ENCODE measurements at regions of chr9 and their contacts with region 1.

Region 1: GRCh38 chr9:132235946-132236661 is 74.2 kb downstream of the NTNG2 start:
- DNase-seq: peak; percentile 44
- H3K4me3 ChIP-seq: no peak overlapping the region
- CTCF ChIP-seq: peak; percentile 98

Region 2: DNA sequence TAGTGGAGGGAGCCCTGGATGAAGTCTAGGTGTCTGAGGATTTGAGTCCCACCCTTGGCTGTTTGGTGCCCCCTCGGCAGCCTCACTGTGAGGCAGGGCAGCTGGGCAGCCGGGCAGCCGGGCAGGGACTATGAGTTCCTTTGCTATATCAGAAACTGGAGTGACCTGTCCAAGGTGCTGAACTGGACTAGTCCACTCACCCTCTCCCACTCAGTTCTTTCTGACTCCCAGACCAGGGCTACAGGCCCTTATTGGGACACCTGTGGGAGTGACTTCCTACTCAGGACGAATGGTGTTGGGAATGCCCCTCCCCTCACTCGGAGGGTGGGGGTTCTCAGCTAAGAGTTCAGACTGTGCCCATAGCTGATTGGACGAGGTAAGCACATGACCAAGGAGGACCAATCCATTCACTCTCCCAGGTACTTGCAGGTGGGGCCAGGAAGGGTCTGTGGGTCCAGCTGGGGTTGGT is 462.2 kb before region 1 on chr9:
- in situ Hi-C with region 1: loop called (anchors 10 kb)
- DNase-seq: peak; percentile 63
- H3K4me3 ChIP-seq: no peak overlapping the region
- CTCF ChIP-seq: no peak

Region 3: DNA sequence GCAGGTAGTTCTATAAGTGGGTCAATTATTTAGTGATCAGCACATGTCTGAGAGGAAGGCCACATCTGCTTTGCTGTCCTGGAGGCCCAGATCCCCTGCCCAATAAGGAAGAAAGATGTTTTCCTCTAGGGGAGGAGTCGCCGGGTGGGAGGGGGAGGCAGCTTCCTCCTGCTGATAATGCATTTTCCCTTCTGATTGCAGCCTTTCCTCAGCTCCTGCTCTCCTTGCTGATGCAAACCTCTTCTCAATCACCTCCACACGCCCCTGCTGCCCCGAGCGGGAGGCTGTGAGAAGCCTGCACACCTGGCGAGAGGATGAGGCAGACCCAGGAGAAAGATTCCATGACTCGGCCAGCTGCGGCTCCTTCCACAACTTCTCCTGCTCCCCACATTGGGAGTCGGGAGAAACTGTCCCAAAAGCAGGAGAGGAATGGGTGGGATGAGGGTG is 81.2 kb before region 1 on chr9:
- in situ Hi-C with region 1: loop called (anchors 5 kb)
- DNase-seq: no peak
- H3K4me3 ChIP-seq: no peak overlapping the region
- CTCF ChIP-seq: no peak

Measured in astrocyte of the cerebellum (primary cell).